Right ventricle myocardium superior (tissue), 1 donor: ENCODE measurements at regions of chr18 and their contacts with region 1.

Region 1: GRCh38 chr18:35580701-35581539 is 620 bp upstream of the GALNT1 start:
- DNase-seq: peak; percentile 75
- ATAC-seq: peak; percentile 86

Region 2: GRCh38 chr18:35407871-35408481 is 172.9 kb before region 1 on chr18:
- intact Hi-C with region 1: loop called (anchors 5 kb)
- DNase-seq: no peak
- ATAC-seq: peak; percentile 88

Region 3: GRCh38 chr18:35497370-35498197 is 83.3 kb before region 1 on chr18 and contains the start of gene INO80C:
- intact Hi-C with region 1: loop called (anchors 5 kb)
- DNase-seq: peak; percentile 95
- ATAC-seq: peak; percentile 99
- total RNA-seq, gene INO80C: 23.1 TPM

Region 4: GRCh38 chr18:35526476-35527120 is 54.3 kb before region 1 on chr18:
- intact Hi-C with region 1: loop called (anchors 10 kb)
- DNase-seq: no peak
- ATAC-seq: peak; percentile 52